GM13976 (cell line): ENCODE measurements at regions of chr16 and their contacts with region 1.

Region 1: DNA sequence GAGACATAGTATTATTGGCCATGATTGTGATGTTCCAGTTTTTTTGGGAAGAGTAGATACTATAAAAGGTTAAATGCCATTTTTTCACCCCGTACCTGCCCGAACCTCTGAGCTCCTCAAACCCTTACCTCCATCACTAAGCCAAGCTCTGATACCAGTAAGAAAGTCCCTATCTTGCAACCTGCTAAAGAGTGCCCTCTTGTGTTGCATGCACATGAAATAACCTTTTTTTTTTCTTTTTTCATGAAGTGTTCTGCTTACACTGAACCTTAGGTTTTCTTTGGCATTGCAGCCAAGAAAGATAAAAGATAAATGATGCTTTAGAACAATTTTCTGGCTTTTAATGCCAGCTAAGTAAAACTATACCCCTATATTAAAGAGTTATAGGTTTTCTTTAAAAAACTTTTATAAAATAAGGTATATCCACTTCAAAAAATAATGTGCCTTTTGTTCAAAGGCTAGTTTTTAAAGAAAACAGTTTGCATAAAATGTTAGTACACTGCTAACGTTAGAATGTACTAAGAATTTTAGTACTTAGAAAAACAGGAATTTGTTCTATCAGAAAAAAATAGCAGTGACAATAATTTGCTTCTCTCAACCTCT is 295.3 kb upstream of the PMFBP1 start:
- DNase-seq: peak; percentile 27
- CTCF ChIP-seq: peak; percentile 34

Region 2: DNA sequence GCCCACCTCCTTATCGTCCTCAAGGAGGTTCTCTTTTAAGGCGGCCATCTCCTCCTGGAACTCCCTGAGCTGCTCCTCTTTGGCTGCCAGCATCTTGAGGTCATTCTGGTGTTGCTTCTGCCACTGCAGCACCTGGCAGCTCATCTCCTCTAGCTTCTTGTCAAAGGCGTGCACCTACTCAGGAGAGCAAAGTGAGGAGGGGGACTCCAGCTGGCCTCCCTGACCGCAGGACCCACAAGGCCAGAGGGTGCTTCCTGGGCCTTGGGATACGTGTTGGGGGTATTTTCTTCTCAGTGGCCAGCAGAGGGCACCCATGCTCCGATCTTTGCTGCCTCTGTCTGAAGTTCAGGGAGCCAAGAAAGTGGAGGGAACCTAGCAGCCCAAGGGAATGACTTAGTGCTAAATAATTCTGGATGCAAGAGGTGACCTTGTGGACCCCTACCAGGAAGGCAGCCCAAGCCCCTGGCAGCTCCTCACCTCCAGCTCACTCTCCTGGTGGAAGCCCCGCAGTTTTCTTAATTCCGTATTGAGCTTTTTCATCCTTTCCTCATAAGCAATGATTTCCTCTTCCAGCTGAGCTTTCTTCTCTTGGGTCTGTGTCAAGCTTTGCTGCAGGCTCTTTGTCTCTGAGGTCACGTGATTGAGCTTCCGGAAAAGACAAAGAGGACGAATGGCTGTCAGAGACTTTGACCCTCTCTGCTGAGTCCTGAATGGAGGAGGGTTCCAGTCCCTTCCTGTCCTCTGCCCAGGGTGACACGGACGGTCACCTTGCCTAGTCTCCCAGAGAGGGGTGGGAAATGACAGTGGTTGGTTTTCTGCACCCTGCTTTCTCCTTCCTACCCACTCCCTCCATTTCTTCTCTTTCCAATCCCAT is 342.3 kb before region 1 on chr16:
- in situ Hi-C with region 1: loop called (anchors 10 kb)
- DNase-seq: peak; percentile 79
- CTCF ChIP-seq: peak; percentile 87

Region 3: GRCh38 chr16:72397876-72398275 is 69.4 kb before region 1 on chr16:
- in situ Hi-C with region 1: no loop called
- DNase-seq: no peak
- CTCF ChIP-seq: no peak

Region 4: DNA sequence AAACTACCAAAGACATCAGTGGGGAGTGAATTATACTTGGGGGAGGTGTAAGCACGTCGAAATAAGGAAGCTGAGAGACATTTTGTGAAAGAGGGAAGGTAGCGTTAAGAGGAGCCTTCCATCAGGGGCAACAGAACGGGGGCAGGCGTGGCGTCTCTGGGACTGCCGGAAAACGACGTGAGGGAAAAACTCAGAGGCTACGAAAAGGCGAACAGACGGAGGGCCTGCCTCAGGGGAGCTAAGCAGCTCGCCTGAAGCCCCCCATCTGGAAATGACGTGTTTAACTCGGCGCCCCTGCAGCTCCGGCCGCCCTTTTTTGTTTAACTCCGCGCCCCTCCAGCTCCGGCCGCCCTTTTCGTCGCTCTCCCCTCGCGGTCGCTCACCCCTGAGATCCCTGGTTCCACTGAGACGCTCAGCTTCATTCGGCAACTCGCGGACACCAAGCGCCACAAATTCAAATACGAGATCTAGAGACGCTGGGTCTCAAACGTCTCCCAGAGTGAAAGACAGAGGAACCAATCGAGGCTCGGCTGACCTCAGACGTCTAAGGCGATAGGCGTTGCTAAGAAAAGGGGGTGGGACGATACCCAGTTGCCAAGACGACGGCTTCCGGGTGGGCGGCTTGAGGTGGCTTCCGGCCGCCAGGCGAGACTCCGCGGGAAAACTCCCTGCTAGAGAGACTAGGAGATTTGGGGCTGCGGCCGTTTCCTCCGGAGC is 197.4 kb after region 1 on chr16:
- in situ Hi-C with region 1: no loop called
- DNase-seq: peak; percentile 96
- CTCF ChIP-seq: no peak

Region 5: DNA sequence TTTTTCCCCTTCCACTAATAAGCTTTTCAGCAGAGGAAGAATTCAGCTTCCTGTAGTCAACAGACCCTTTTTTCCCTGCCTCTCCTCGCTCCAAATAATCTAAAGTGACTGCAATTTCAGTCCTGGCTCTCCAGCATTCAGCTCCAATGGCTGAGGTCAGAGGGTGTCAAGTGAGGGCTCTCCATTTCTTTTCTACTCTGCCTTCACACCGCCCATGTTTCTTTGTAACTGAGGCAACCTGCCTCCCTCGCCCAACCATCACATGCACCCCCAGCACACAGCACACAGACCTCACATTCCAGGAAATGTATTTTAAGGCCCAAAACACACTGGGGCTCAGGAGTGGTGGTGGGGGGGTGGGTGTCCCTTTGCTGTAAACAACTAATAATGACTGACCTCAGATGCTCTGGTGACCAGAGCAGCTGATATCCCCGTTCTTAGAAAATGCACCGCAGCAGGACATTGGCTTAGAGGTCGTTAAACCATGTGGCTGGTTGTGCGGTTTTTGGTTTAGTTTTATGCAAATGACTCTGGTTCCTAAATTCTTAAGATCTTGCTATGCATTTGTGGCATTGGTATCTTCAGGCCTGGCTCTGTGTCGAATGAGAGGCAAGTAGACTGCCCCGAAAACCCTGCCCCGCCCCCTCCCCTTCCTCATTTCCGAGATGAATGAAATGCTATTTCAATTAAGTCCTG is 377.1 kb after region 1 on chr16:
- in situ Hi-C with region 1: no loop called
- DNase-seq: no peak
- CTCF ChIP-seq: no peak